ENCODE measurements at regions of chr10 and their contacts with region 1.

Region 1: GRCh38 chr10:27312854-27313253 is 72.3 kb upstream of the ACBD5 start:
- DNase-seq: no peak
- H3K4me3 Mint-ChIP-seq: no peak overlapping the region
- H3K27ac Mint-ChIP-seq: no peak overlapping the region
- H3K4me1 Mint-ChIP-seq: peaks cover 7% of the 10 kb centered on the region
- H3K27me3 Mint-ChIP-seq: no peaks in the 10 kb centered on the region
- CTCF ChIP-seq: no peak

Region 2: DNA sequence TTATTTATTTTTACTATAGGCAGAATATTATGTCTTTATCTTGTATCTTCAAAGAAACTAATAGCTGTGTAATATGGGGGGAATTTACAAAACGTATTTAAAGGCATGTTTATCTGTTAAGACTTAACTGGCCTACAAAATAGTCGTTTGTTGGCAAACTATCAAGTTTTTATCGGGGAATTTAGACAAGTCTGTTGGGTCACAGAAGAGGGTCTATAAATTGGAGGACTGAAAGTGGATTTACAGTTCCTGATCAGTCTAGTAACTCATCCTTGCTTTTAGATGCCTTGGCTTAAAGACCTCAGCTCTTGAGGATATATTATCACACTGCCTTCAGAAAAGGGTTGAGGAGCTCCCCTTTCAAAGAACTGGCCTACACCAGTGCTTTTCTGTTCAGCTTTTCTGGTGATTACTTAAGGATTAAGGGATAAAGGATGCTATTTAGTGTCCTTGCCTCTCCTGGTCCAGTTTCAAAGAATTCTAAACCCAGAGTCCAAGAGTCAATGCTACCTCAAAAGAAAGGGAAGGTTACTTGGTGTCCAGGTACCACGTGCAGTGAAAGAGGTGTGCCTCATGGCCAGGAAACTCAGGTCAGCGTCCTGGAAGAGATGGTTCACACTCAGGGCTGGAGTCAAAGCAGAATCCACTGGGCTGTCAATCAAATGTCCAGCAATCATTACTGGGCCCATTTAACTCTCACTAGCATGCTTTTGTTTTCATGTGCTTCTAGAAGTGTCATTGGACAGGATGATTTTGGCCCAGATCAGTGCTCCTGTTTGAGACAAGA is 409.2 kb before region 1 on chr10:
- CTCF ChIA-PET with region 1: no interaction called
- POLR2A ChIA-PET with region 1: no interaction called
- intact Hi-C with region 1: loop called (anchors 5 kb)
- DNase-seq: no peak
- H3K4me3 Mint-ChIP-seq: no peak overlapping the region
- H3K27ac Mint-ChIP-seq: no peak overlapping the region
- H3K4me1 Mint-ChIP-seq: no peaks in the 10 kb centered on the region
- H3K27me3 Mint-ChIP-seq: no peaks in the 10 kb centered on the region
- CTCF ChIP-seq: no peak

Region 3: DNA sequence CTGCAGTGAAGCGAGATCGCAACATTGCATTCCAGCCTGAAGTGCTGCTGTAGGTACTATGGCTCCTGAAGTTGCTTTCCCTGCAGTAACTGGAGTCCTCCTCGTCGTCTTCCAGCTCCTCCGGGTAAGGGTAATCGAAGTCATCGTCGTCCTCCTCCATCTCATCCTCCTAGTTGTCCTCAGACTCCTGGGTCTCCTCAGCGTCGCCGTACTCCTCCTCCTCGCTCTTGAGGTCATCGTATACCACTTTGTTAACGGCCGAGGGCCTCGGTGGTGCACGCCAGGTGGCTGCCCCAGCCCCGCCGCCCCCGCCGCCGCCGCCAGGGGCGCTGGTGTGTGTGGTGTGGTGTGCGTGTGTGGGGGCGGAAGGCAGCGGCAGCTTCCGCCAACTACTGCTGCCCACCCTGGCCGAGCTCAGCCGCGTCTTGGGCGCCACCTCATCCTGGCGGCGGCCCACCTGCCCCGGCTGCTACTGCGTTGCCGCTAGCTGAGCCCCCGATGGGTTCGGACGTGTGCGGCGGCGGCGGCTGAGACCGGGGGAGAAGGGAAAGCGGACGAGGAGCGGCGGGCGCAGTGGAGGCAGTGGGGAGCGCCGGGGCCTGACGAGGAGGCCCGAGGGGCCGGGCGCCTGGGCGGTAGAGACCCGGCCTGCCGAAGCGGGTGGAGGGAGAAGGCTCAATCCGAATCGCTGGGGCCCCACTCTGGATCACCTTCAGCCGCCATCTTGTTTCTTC is 60.4 kb before region 1 on chr10:
- CTCF ChIA-PET with region 1: no interaction called
- POLR2A ChIA-PET with region 1: no interaction called
- intact Hi-C with region 1: no loop called
- DNase-seq: no peak
- H3K4me3 Mint-ChIP-seq: no peak overlapping the region
- H3K27ac Mint-ChIP-seq: no peak overlapping the region
- H3K4me1 Mint-ChIP-seq: no peaks in the 10 kb centered on the region
- H3K27me3 Mint-ChIP-seq: no peaks in the 10 kb centered on the region
- CTCF ChIP-seq: no peak